Activated naive CD4-positive, alpha-beta T cell treated with anti-CD3 and anti-CD28 coated beads, Interleukin-2, amount 10 ng/mL, durations not matched to agents 7 days and 5 days (primary cell): ENCODE measurements at regions of chr6 and their contacts with region 1.

Region 1: GRCh38 chr6:159125014-159125609 is 44.1 kb upstream of the FNDC1 start:
- DNase-seq: no peak
- H3K4me3 Mint-ChIP-seq: no peak overlapping the region
- H3K27ac Mint-ChIP-seq: no peak overlapping the region
- H3K4me1 Mint-ChIP-seq: no peaks in the 10 kb centered on the region
- H3K27me3 Mint-ChIP-seq: peaks cover 41% of the 10 kb centered on the region

Region 2: DNA sequence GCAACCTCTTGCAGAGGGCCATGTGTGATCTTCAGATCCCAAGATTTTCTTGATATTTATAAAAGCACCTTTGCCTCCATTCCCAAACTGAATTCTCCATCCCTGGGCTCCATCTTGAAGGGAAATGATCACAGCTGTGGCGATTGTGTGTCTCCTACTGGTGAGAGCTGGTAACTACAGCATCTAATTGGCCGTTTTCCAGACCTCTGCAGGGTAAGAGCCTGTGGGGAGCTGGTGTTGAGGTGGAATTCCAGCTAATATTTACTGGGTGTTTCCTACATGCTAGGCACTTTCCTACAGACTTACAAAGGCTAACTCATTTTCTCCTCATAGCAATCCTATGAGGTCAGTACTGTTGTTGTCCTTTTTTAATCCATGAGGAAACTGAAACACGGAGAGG is 15.1 kb before region 1 on chr6:
- CTCF ChIA-PET with region 1: interaction called, 21 read pairs
- DNase-seq: peak; percentile 44
- H3K4me3 Mint-ChIP-seq: no peak overlapping the region
- H3K27ac Mint-ChIP-seq: no peak overlapping the region
- H3K4me1 Mint-ChIP-seq: peaks cover 60% of the 10 kb centered on the region
- H3K27me3 Mint-ChIP-seq: peaks cover 2% of the 10 kb centered on the region

Region 3: GRCh38 chr6:159151266-159151855 is 26.2 kb after region 1 on chr6:
- CTCF ChIA-PET with region 1: no interaction called
- DNase-seq: peak; percentile 53
- H3K4me3 Mint-ChIP-seq: no peak overlapping the region
- H3K27ac Mint-ChIP-seq: no peak overlapping the region
- H3K4me1 Mint-ChIP-seq: peaks cover 2% of the 10 kb centered on the region
- H3K27me3 Mint-ChIP-seq: peaks cover 18% of the 10 kb centered on the region

Region 4: DNA sequence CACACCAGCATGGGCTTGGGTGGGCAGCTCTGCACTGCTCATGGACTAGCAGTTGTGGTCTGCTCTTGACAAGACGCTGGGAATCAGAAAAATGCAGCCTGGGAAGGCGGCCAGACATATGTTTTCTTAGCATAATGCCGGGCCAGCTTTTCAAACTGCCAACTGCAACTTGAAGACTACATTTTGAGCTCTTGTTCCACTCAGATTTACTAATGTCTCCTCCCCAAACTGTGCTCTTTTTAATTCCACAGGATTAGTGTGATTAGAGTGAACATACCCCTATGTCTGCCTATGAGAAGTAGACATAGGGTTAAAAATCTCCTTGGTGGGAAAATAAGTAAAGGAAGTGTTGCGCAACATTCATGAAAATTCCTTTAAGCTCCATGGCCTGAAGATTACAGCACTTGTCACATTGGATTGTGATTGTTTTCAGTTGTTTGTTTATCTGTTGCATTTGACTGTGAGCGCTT is 38.8 kb after region 1 on chr6:
- CTCF ChIA-PET with region 1: no interaction called
- DNase-seq: no peak
- H3K4me3 Mint-ChIP-seq: no peak overlapping the region
- H3K27ac Mint-ChIP-seq: no peak overlapping the region
- H3K4me1 Mint-ChIP-seq: peaks cover 9% of the 10 kb centered on the region
- H3K27me3 Mint-ChIP-seq: peaks cover 53% of the 10 kb centered on the region